GM12878 (cell line): ENCODE measurements at regions of chr4 and their contacts with region 1.

Region 1: GRCh38 chr4:99821918-99822503 is 5.4 kb downstream of the DAPP1 start:
- DNase-seq: peak; percentile 59
- ATAC-seq: peak; percentile 73
- H3K4me3 ChIP-seq: peak overlapping the region; percentile 59; the same call in 1 of the 2 replicates
- H3K27ac ChIP-seq: peak overlapping the region; percentile 70
- H3K4me1 ChIP-seq: peaks cover 17% of the 10 kb centered on the region; the same call in 1 of the 2 replicates
- H3K27me3 ChIP-seq: no peaks in the 10 kb centered on the region
- CTCF ChIP-seq: no peak
- EP300 ChIP-seq: no peak
- POLR2A ChIP-seq: no peak
- RAD21 ChIP-seq: no peak

Region 2: GRCh38 chr4:99483636-99484035 is 338.4 kb before region 1 on chr4:
- CTCF ChIA-PET with region 1: no interaction called
- POLR2A ChIA-PET with region 1: no interaction called
- RAD21 ChIA-PET with region 1: no interaction called
- SMC1A ChIA-PET with region 1: no interaction called
- in situ Hi-C with region 1: no loop called
- intact Hi-C with region 1: no loop called
- DNase-seq: no peak
- ATAC-seq: no peak
- H3K4me3 ChIP-seq: no peak overlapping the region
- H3K27ac ChIP-seq: no peak overlapping the region
- H3K4me1 ChIP-seq: no peaks in the 10 kb centered on the region
- H3K27me3 ChIP-seq: no peaks in the 10 kb centered on the region
- CTCF ChIP-seq: no peak
- EP300 ChIP-seq: no peak
- POLR2A ChIP-seq: no peak
- RAD21 ChIP-seq: no peak

Region 3: GRCh38 chr4:99755223-99755944 is 66.6 kb before region 1 on chr4:
- CTCF ChIA-PET with region 1: no interaction called
- POLR2A ChIA-PET with region 1: no interaction called
- RAD21 ChIA-PET with region 1: no interaction called
- SMC1A ChIA-PET with region 1: no interaction called
- in situ Hi-C with region 1: no loop called
- intact Hi-C with region 1: no loop called
- DNase-seq: no peak
- ATAC-seq: no peak
- H3K4me3 ChIP-seq: no peak overlapping the region
- H3K27ac ChIP-seq: no peak overlapping the region
- H3K4me1 ChIP-seq: no peaks in the 10 kb centered on the region
- H3K27me3 ChIP-seq: no peaks in the 10 kb centered on the region
- CTCF ChIP-seq: no peak
- EP300 ChIP-seq: no peak
- POLR2A ChIP-seq: no peak
- RAD21 ChIP-seq: no peak

Region 4: DNA sequence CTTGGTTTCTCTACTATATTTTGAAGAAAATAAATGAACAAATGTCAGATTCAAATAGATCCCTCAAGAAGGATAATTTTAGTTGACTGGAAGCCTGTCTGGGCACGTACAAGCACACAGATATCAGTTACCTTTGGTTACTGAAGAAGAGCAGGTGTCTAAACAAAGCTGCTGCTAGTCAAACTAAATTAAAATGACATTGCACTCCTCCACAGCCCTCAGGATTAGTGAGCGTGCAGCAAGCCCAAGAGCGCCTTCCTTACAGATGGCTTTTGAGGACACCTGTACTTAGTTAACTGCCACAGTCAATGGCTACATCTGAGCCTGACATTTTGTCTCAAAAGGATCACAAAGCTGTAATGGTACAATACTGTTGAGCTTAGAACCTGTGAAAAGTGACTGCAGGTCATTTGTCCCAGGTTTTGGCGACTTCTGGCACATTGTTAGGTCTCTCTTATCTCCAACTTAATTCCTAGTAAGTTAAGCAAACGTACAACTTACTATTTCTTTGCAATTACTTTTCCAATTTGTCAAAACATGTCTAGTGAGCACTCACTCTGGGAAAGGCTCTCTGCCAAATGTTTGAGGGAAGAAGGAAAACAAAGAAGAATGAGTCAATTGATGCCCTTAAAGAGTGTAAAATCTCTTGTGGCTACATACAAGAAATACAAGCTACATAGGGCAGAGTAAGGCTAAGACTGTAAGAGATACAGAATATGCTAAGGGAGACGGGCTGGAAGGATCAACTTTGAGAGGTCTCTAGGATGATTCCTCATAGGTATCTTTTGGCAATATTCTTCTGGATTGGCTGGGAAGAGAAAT is 31.0 kb before region 1 on chr4:
- CTCF ChIA-PET with region 1: no interaction called
- POLR2A ChIA-PET with region 1: no interaction called
- RAD21 ChIA-PET with region 1: no interaction called
- SMC1A ChIA-PET with region 1: no interaction called
- in situ Hi-C with region 1: no loop called
- intact Hi-C with region 1: no loop called
- DNase-seq: no peak
- ATAC-seq: no peak
- H3K4me3 ChIP-seq: no peak overlapping the region
- H3K27ac ChIP-seq: no peak overlapping the region
- H3K4me1 ChIP-seq: no peaks in the 10 kb centered on the region
- H3K27me3 ChIP-seq: no peaks in the 10 kb centered on the region; a peak in 1 of 4 replicates
- CTCF ChIP-seq: no peak
- EP300 ChIP-seq: no peak
- POLR2A ChIP-seq: no peak
- RAD21 ChIP-seq: no peak

Region 5: DNA sequence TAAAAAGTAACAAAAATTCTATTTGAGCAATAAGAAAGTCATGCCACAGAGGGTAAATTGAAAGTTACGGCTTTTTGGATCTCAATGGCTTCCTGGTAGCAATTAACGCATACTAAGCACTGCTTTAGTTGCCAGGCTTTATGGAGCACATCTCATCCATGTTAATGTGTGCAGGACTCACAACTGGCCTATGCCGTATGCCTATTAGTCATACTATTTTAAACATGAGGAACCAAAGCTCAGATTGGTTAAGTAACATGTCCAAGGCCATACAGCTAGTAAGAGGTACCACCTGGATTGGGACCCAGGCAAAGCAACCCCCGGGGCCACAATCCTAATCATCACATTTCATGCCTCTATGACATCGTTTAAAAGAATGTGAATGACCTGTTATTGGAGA is 11.7 kb after region 1 on chr4:
- CTCF ChIA-PET with region 1: interaction called, 5 read pairs
- POLR2A ChIA-PET with region 1: interaction called, 5 read pairs
- RAD21 ChIA-PET with region 1: interaction called, 13 read pairs
- SMC1A ChIA-PET with region 1: interaction called, 19 read pairs
- in situ Hi-C with region 1: no loop called
- intact Hi-C with region 1: no loop called
- DNase-seq: no peak
- ATAC-seq: no peak
- H3K4me3 ChIP-seq: no peak overlapping the region
- H3K27ac ChIP-seq: no peak overlapping the region
- H3K4me1 ChIP-seq: no peaks in the 10 kb centered on the region
- H3K27me3 ChIP-seq: no peaks in the 10 kb centered on the region
- CTCF ChIP-seq: no peak
- EP300 ChIP-seq: no peak
- POLR2A ChIP-seq: no peak
- RAD21 ChIP-seq: no peak

Region 6: DNA sequence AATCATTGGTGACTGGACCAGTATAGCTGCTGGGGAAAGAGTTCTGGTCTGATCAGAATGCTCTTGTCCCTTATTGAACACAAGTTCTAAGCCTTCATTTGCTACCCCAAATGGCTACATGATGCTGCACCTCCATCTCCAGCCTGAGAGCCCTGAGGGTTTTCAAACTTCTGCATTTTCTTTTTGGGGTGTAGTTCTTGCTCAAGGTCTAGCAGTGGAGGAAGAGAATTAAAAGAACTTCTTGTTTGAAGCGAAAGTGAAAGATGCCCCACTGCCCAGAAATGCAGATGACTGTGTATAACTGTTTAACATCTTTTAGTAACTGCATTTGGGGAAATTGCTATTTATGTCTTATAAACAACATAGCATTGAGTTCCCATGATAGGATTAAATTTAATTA is 33.7 kb after region 1 on chr4:
- CTCF ChIA-PET with region 1: interaction called, 7 read pairs
- POLR2A ChIA-PET with region 1: interaction called, 30 read pairs
- RAD21 ChIA-PET with region 1: interaction called, 43 read pairs
- SMC1A ChIA-PET with region 1: interaction called, 55 read pairs
- in situ Hi-C with region 1: no loop called
- intact Hi-C with region 1: loop called (anchors 1 kb)
- DNase-seq: peak; percentile 53
- ATAC-seq: peak; percentile 28
- H3K4me3 ChIP-seq: no peak overlapping the region
- H3K27ac ChIP-seq: peak overlapping the region; percentile 58; the same call in 1 of the 2 replicates
- H3K4me1 ChIP-seq: peaks cover 43% of the 10 kb centered on the region
- H3K27me3 ChIP-seq: no peaks in the 10 kb centered on the region
- CTCF ChIP-seq: no peak
- EP300 ChIP-seq: 0 out of 4 replicates have a peak, but pooled peaks of 1 of the 2 experiments have one; percentile 9
- POLR2A ChIP-seq: no peak
- RAD21 ChIP-seq: no peak

Region 7: DNA sequence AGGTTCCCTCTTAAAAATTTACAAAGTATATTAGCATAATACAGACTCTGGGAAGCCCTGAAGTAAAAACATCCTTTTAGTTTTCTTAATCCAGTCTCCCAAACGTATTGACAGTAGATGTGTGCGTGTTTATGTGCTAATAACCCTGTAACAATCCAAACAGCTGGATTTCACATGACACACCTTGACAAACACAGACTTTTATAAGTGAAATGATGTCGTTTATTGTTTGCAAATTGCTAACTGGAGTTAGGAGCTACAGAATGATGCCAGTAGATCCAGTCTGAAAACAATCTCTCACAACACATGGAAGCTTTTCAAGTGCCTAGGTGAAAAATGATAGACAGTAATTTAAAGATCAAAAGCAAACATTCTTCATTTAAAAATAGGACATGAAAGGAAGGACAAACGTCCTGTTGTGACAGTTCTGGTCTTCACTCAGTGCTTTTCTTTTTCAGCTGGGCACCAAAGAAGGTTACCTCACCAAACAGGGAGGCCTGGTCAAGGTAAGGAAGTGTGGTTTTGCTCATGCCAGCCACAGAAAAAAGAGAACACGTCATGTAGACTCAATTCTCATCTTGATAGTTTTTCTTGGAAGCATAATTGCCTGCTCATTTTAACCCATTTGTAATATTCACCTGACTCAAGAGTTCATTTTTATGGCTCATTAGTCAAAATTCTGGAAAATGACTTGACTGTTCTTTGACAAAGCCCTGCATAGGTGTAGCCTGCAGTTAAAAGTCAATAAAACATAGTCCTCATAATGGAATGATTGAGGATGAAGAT is 39.3 kb after region 1 on chr4:
- CTCF ChIA-PET with region 1: interaction called, 4 read pairs
- POLR2A ChIA-PET with region 1: interaction called, 11 read pairs
- RAD21 ChIA-PET with region 1: interaction called, 43 read pairs
- SMC1A ChIA-PET with region 1: interaction called, 55 read pairs
- in situ Hi-C with region 1: no loop called
- intact Hi-C with region 1: no loop called
- DNase-seq: no peak
- ATAC-seq: peak; percentile 81
- H3K4me3 ChIP-seq: no peak overlapping the region
- H3K27ac ChIP-seq: peak overlapping the region; percentile 24; the same call in 1 of the 2 replicates
- H3K4me1 ChIP-seq: peaks cover 14% of the 10 kb centered on the region
- H3K27me3 ChIP-seq: no peaks in the 10 kb centered on the region
- CTCF ChIP-seq: no peak
- EP300 ChIP-seq: no peak
- POLR2A ChIP-seq: no peak
- RAD21 ChIP-seq: no peak

Region 8: DNA sequence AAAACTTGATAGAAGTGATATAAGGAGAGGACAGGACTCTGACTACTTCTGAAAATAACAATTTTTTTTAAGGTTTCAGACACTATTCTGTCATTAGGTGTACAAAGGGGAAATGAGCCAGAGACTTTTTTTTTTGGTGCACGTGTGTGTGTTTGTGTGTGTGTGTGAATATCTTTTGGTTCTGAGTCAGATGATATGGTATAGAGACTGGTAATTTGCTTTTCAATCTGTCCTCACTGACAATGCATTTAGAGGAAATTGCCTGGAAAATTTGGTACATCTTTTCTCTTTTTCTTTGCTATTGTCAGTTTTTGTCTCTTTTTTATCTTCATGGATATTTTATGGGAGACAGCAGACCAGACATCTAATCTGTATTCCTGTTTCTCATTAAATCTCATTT is 309.0 kb after region 1 on chr4:
- CTCF ChIA-PET with region 1: no interaction called
- POLR2A ChIA-PET with region 1: no interaction called
- RAD21 ChIA-PET with region 1: no interaction called
- SMC1A ChIA-PET with region 1: no interaction called
- in situ Hi-C with region 1: no loop called
- intact Hi-C with region 1: no loop called
- DNase-seq: no peak
- ATAC-seq: no peak
- H3K4me3 ChIP-seq: no peak overlapping the region
- H3K27ac ChIP-seq: no peak overlapping the region
- H3K4me1 ChIP-seq: no peaks in the 10 kb centered on the region
- H3K27me3 ChIP-seq: no peaks in the 10 kb centered on the region
- CTCF ChIP-seq: no peak
- EP300 ChIP-seq: no peak
- POLR2A ChIP-seq: no peak
- RAD21 ChIP-seq: no peak